ENCODE measurements at regions of chr7 and their contacts with region 1.

Region 1: GRCh38 chr7:50418086-50418515 is 32.0 kb downstream of the FIGNL1 start:
- DNase-seq: peak; percentile 66
- ATAC-seq: peak; percentile 99
- H3K4me3 ChIP-seq: no peak overlapping the region
- H3K27ac ChIP-seq: no peak overlapping the region
- H3K4me1 ChIP-seq: 0 out of 2 replicates have a peak, but pooled peaks cover 3% of the 10 kb centered on the region
- H3K27me3 ChIP-seq: peaks cover 0 to 16% of the 10 kb centered on the region in 2 experiments; a peak in 3 of 5 replicates
- CTCF ChIP-seq: peak; percentile 86
- EP300 ChIP-seq: no peak
- POLR2A ChIP-seq: no peak
- RAD21 ChIP-seq: peak; percentile 68

Region 2: GRCh38 chr7:50142425-50143017 is 275.6 kb before region 1 on chr7:
- CTCF ChIA-PET with region 1: interaction called, 13 read pairs
- POLR2A ChIA-PET with region 1: no interaction called
- in situ Hi-C with region 1: loop called (anchors 10 kb)
- intact Hi-C with region 1: loop called (anchors 1 kb)
- DNase-seq: peak; percentile 12
- ATAC-seq: no peak
- H3K4me3 ChIP-seq: no peak overlapping the region
- H3K27ac ChIP-seq: no peak overlapping the region
- H3K4me1 ChIP-seq: no peaks in the 10 kb centered on the region
- H3K27me3 ChIP-seq: no peaks in the 10 kb centered on the region
- CTCF ChIP-seq: peak; percentile 49
- EP300 ChIP-seq: no peak
- POLR2A ChIP-seq: no peak
- RAD21 ChIP-seq: no peak

Region 3: GRCh38 chr7:50206453-50207250 is 211.4 kb before region 1 on chr7:
- CTCF ChIA-PET with region 1: interaction called, 15 read pairs
- POLR2A ChIA-PET with region 1: no interaction called
- in situ Hi-C with region 1: loop called (anchors 10 kb)
- intact Hi-C with region 1: loop called (anchors 1 kb)
- DNase-seq: peak; percentile 40
- ATAC-seq: no peak; the same call in 1 of the 3 replicates
- H3K4me3 ChIP-seq: no peak overlapping the region
- H3K27ac ChIP-seq: no peak overlapping the region
- H3K4me1 ChIP-seq: peaks cover 19% of the 10 kb centered on the region
- H3K27me3 ChIP-seq: peaks cover 0 to 8% of the 10 kb centered on the region in 2 experiments; a peak in 1 of 5 replicates
- CTCF ChIP-seq: no peak
- EP300 ChIP-seq: no peak
- POLR2A ChIP-seq: no peak
- RAD21 ChIP-seq: no peak

Measured in HepG2 (cell line).